Naive thymus-derived CD4-positive, alpha-beta T cell (primary cell): ENCODE measurements at regions of chr9 and their contacts with region 1.

Region 1: GRCh38 chr9:128275996-128276573 is at the starts of genes GOLGA2 and SWI5:
- DNase-seq: peak; percentile 98 to 100 (median 100)
- ATAC-seq: peak; percentile 98
- H3K4me3 ChIP-seq: peak within 1 kb of the TSS; percentile 95
- H3K4me3 Mint-ChIP-seq: peak within 1 kb of the TSS; percentile 94 to 98 (median 96)
- H3K27ac ChIP-seq: peak within 1 kb of the TSS; percentile 90
- H3K27ac Mint-ChIP-seq: peak within 1 kb of the TSS; percentile 94 to 98 (median 97)
- H3K4me1 ChIP-seq: peaks cover 16 to 21% of the 10 kb centered on the region in 2 donors
- H3K4me1 Mint-ChIP-seq: peaks cover 24 to 51% (median 46%) of the 10 kb centered on the region in 7 donors
- H3K27me3 ChIP-seq: no peaks in the 10 kb centered on the region
- H3K27me3 Mint-ChIP-seq: peaks cover 0 to 7% (median 0%) of the 10 kb centered on the region in 5 donors
- total RNA-seq, gene GOLGA2: 56.5 to 76.6 (median 70.6) TPM
- total RNA-seq, gene SWI5: 8.7 to 17.4 (median 9.8) TPM

Region 2: DNA sequence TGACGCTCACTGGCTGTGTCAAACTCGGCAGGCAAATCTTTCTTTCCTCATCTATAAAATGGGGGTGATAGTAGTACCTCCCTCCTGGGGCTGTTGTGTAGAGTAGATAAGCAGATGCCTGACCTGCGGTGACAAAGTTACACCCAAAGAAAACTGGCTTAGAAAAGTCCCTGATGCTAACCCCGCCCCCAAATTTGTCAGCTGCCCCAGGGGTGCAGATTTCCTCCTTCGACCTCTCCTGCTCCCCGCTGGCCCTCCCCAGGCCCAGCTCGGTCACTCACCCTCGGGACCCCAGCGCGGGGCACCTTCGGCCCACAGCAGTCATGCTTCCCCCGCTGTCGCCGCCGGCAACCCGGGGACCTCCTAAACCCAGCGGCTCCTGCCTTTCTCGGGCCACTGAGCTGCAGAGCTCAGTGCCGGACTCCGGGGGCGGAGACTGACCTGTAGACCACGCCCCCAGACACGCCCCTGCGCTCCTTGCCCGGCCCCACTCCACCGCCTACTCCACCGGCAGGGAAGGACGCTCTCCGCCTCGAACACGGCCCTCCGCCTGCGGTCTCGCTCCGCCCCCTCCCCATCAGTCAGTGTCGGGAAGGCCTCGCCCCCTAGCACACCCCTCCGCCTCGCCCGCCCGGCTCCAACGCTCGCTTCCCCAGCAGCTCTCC is 505.0 kb before region 1 on chr9:
- CTCF ChIA-PET with region 1: no interaction called
- POLR2A ChIA-PET with region 1: no interaction called
- intact Hi-C with region 1: loop called in 1 of 2 experiments (anchors 10 kb)
- DNase-seq: peak; percentile 85 to 99 (median 92)
- ATAC-seq: peak; percentile 92
- H3K4me3 ChIP-seq: peak overlapping the region; percentile 71
- H3K4me3 Mint-ChIP-seq: peak overlapping the region; percentile 74 to 92 (median 86)
- H3K27ac ChIP-seq: peak overlapping the region; percentile 90
- H3K27ac Mint-ChIP-seq: peak overlapping the region; percentile 90 to 96 (median 94)
- H3K4me1 ChIP-seq: peaks cover 57 to 59% of the 10 kb centered on the region in 2 donors
- H3K4me1 Mint-ChIP-seq: peaks cover 44 to 82% (median 71%) of the 10 kb centered on the region in 7 donors
- H3K27me3 ChIP-seq: no peaks in the 10 kb centered on the region
- H3K27me3 Mint-ChIP-seq: no peaks in the 10 kb centered on the region

Region 3: DNA sequence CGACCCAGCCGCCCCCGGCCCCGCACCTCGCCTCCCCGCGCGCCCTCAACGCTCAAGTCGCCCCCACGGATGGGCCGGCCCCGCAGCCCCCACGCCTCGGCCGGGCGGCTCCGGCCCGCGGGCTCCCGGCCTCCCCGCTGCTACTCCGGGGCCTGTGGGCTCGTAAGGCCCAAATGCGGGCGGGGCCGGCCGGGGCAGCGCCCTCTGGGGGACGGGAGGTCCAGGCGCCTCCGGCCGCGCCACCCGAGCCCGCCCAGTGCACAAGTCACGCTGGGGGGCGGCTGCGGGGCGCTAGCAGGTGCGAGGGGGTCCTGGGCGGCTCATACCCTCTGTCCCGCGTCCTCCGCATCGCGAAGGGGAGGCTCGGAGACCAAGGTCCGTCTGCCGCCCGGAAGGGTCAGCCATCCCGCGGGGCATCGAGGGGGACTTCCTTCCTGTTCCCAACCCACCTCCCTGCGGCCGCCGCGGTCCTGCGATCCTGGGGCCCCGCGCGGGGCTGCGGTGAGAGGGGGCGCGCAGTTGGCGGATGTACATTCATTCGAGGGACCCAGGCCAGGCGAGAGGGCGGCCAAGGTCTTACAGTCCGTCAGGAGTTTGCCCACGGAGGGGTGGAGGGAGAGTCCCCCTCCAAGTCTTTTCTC is 84.6 kb before region 1 on chr9 and contains the start of gene CIZ1:
- CTCF ChIA-PET with region 1: no interaction called
- POLR2A ChIA-PET with region 1: interaction called, 5 read pairs
- intact Hi-C with region 1: loop called in 1 of 2 experiments (anchors 5 kb)
- DNase-seq: peak; percentile 51 to 86 (median 69)
- ATAC-seq: peak; percentile 95
- H3K4me3 ChIP-seq: peak within 1 kb of the TSS; percentile 76
- H3K4me3 Mint-ChIP-seq: peak within 1 kb of the TSS; percentile 92 to 99 (median 96)
- H3K27ac ChIP-seq: peak within 1 kb of the TSS; percentile 89
- H3K27ac Mint-ChIP-seq: peak within 1 kb of the TSS; percentile 84 to 93 (median 90)
- H3K4me1 ChIP-seq: peaks cover 12 to 16% of the 10 kb centered on the region in 2 donors
- H3K4me1 Mint-ChIP-seq: peaks cover 13 to 39% (median 31%) of the 10 kb centered on the region in 7 donors
- H3K27me3 ChIP-seq: no peaks in the 10 kb centered on the region
- H3K27me3 Mint-ChIP-seq: peaks cover 0 to 13% (median 0%) of the 10 kb centered on the region in 5 donors
- total RNA-seq, gene CIZ1: 110 to 163 (median 142) TPM

Region 4: DNA sequence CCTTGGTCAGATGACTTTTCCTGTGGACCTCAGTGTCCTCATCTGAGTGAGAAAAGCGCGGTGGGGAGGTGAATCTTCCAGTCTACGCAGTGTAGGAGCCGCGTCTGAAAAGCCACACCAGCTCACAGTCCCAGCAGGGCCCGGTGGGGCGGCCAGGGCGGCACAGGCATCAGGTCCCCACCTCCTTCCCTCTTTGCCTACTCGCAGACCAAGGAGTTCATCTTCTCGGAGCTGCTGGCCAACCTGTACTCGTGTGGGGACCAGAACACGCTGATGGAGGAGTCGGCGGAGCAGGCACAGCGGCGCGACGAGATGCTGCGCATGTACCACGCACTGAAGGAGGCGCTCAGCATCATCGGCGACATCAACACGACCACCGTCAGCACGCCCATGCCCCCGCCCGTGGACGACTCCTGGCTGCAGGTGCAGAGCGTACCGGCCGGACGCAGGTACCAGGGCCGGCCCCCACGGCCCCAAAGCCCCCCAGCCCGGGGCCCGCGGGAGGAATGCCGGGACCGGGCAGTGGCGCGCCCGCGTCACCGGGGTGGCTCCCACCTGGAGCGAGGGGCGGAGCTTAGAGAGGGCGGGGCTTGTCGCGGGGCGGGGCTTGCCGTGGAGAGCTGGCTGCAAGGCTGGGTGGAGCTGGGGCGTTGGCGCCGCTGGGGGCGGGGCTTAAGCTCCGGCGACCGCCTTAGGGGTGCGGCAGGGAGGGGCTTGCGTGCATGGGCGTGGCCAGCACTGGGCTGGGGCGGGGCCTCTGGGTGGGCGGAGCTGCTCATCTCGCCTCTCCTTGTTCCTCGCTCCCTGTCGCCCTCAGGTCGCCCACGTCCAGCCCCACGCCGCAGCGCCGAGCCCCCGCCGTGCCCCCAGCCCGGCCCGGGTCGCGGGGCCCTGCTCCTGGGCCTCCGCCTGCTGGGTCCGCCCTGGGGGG is 25.9 kb before region 1 on chr9:
- CTCF ChIA-PET with region 1: no interaction called
- POLR2A ChIA-PET with region 1: interaction called, 10 read pairs
- intact Hi-C with region 1: loop called (anchors 1 kb)
- DNase-seq: peak; percentile 96 to 100 (median 98)
- ATAC-seq: peak; percentile 98
- H3K4me3 ChIP-seq: peak overlapping the region; percentile 83
- H3K4me3 Mint-ChIP-seq: peak overlapping the region; percentile 79 to 93 (median 88)
- H3K27ac ChIP-seq: peak overlapping the region; percentile 72
- H3K27ac Mint-ChIP-seq: peak overlapping the region; percentile 60 to 97 (median 95)
- H3K4me1 ChIP-seq: peaks cover 7 to 9% of the 10 kb centered on the region in 2 donors
- H3K4me1 Mint-ChIP-seq: peaks cover 7 to 28% (median 17%) of the 10 kb centered on the region in 7 donors
- H3K27me3 ChIP-seq: no peaks in the 10 kb centered on the region
- H3K27me3 Mint-ChIP-seq: peaks cover 0 to 39% (median 6%) of the 10 kb centered on the region in 5 donors

Region 5: DNA sequence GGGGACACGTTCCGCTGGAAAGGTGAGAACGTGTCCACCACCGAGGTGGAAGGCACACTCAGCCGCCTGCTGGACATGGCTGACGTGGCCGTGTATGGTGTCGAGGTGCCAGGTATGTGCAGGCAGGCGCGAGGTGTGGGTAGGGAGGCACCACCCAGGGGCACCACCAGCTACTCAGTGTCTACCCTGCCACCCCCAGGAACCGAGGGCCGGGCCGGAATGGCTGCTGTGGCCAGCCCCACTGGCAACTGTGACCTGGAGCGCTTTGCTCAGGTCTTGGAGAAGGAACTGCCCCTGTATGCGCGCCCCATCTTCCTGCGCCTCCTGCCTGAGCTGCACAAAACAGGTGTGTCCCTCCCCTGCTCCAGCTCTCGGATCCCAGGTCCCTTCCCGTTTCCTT is 79.4 kb after region 1 on chr9:
- CTCF ChIA-PET with region 1: no interaction called
- POLR2A ChIA-PET with region 1: no interaction called
- intact Hi-C with region 1: no loop called
- DNase-seq: no peak
- ATAC-seq: no peak
- H3K4me3 ChIP-seq: no peak overlapping the region
- H3K4me3 Mint-ChIP-seq: no peak overlapping the region
- H3K27ac ChIP-seq: no peak overlapping the region
- H3K27ac Mint-ChIP-seq: no peak overlapping the region
- H3K4me1 ChIP-seq: no peaks in the 10 kb centered on the region
- H3K4me1 Mint-ChIP-seq: no peaks in the 10 kb centered on the region
- H3K27me3 ChIP-seq: no peaks in the 10 kb centered on the region
- H3K27me3 Mint-ChIP-seq: no peaks in the 10 kb centered on the region

Region 6: GRCh38 chr9:128504485-128505413 is 228.7 kb after region 1 on chr9 and contains the start of gene GLE1:
- CTCF ChIA-PET with region 1: no interaction called
- POLR2A ChIA-PET with region 1: interaction called, 3 read pairs
- intact Hi-C with region 1: loop called in 1 of 2 experiments (anchors 1 kb)
- DNase-seq: peak; percentile 93 to 99 (median 97)
- ATAC-seq: peak; percentile 98
- H3K4me3 ChIP-seq: peak within 1 kb of the TSS; percentile 97
- H3K4me3 Mint-ChIP-seq: peak within 1 kb of the TSS; percentile 92 to 100 (median 99)
- H3K27ac ChIP-seq: peak within 1 kb of the TSS; percentile 92
- H3K27ac Mint-ChIP-seq: peak within 1 kb of the TSS; percentile 82 to 100 (median 99)
- H3K4me1 ChIP-seq: peaks cover 8 to 11% of the 10 kb centered on the region in 2 donors
- H3K4me1 Mint-ChIP-seq: peaks cover 0 to 38% (median 34%) of the 10 kb centered on the region in 7 donors
- H3K27me3 ChIP-seq: no peaks in the 10 kb centered on the region
- H3K27me3 Mint-ChIP-seq: no peaks in the 10 kb centered on the region
- total RNA-seq, gene GLE1: 14.2 to 46.5 (median 30.5) TPM

Region 7: DNA sequence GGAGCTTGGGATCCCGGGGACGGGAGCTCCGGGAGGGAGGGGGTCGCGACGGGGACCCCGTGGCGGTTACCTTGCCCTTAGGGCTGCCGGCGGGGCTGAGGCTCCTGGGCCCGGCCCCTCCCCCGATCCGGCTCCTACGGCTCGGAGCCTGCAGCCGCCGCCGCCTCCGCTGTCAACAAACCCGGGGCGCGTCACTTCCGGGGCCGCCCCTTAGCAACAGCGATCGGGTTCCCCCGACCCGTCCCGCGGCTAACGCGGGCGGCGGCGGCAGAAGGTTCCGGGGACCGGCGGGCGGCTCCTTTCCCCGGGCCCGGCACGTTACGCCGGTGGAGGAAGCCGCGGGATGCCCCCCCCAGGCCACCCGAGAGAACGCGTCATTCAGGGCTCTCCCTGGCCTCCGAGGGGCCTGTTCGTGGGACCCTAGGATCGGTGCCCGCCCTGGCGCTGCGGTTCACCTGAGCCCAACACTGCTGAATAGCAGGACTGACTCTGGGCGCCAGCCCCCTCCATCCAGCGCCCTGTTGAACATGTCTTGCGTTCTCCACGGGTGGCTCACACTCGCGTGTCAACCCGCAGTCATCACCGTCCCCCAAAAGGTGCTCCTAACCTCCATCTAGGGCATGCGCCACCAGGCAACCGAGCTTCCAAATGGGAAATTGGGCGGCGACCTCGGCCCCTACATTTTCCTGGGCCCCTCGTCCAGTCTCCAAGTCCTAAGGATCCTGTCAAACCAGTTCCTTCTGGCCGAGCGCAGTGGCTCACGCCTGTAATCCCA is 495.8 kb after region 1 on chr9 and contains the start of gene ZER1:
- CTCF ChIA-PET with region 1: no interaction called
- POLR2A ChIA-PET with region 1: no interaction called
- intact Hi-C with region 1: loop called in 1 of 2 experiments (anchors 5 kb)
- DNase-seq: peak; percentile 92 to 98 (median 95)
- ATAC-seq: peak; percentile 97
- H3K4me3 ChIP-seq: peak within 1 kb of the TSS; percentile 97
- H3K4me3 Mint-ChIP-seq: peak within 1 kb of the TSS; percentile 95 to 99 (median 98)
- H3K27ac ChIP-seq: peak within 1 kb of the TSS; percentile 93
- H3K27ac Mint-ChIP-seq: peak within 1 kb of the TSS; percentile 93 to 100 (median 100)
- H3K4me1 ChIP-seq: peaks cover 7 to 12% of the 10 kb centered on the region in 2 donors
- H3K4me1 Mint-ChIP-seq: peaks cover 21 to 40% (median 39%) of the 10 kb centered on the region in 7 donors
- H3K27me3 ChIP-seq: no peaks in the 10 kb centered on the region
- H3K27me3 Mint-ChIP-seq: no peaks in the 10 kb centered on the region
- total RNA-seq, gene ZER1: 22.7 to 51.2 (median 34.7) TPM

Region 8: GRCh38 chr9:129610473-129611301 is 1334.6 kb after region 1 on chr9:
- CTCF ChIA-PET with region 1: no interaction called
- POLR2A ChIA-PET with region 1: no interaction called
- intact Hi-C with region 1: no loop called
- DNase-seq: peak; percentile 53 to 79 (median 71)
- ATAC-seq: peak; percentile 83
- H3K4me3 ChIP-seq: peak overlapping the region; percentile 52
- H3K4me3 Mint-ChIP-seq: peak overlapping the region; percentile 57 to 96 (median 80)
- H3K27ac ChIP-seq: peak overlapping the region; percentile 17
- H3K27ac Mint-ChIP-seq: peak overlapping the region in 5 of 9 donors; percentile 62 to 85 (median 67)
- H3K4me1 ChIP-seq: peaks cover 19 to 21% of the 10 kb centered on the region in 2 donors
- H3K4me1 Mint-ChIP-seq: peaks cover 13 to 44% (median 30%) of the 10 kb centered on the region in 7 donors
- H3K27me3 ChIP-seq: no peaks in the 10 kb centered on the region
- H3K27me3 Mint-ChIP-seq: peaks cover 0 to 4% (median 0%) of the 10 kb centered on the region in 5 donors